AG04450 (cell line): ENCODE measurements at regions of chr1 and their contacts with region 1.

Region 1: DNA sequence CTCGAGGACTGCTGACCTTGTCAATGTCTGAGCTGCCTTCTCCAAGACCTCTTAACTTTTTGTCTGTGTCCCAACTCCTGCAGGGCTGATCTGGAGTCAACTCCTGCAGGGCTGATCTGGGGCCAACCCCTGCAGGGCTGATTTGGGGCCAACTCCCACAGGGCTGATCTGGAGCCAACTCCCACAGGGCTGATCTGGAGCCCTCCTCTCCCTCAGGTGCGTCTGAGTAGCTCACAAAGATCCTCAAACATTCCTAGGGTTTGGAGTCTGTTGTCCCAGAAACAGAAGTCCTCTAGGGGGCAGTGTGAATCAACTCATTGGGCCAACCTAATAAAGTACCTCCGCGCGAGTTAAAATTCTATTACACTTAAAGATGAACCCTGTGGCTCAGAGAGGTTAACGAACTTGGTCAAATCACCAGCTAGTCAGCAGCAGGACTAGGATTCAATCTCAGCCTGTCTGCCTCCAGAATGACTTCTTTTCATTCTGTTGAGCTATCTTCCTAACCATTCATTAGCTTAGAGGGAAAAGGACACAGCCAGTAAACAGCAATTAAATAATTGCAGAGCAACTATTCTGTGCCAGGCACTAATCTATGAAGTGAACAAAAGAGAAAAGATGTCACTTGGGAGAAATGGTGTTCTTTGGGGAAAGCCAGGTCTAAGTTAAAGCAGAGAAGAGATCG is 17.2 kb upstream of the RLF start:
- DNase-seq: peak; percentile 36
- H3K4me3 ChIP-seq: no peak overlapping the region
- H3K27ac ChIP-seq: no peak overlapping the region
- H3K27me3 ChIP-seq: peaks cover 30% of the 10 kb centered on the region
- CTCF ChIP-seq: peak; percentile 85

Region 2: GRCh38 chr1:40132383-40133311 is 11.4 kb before region 1 on chr1:
- CTCF ChIA-PET with region 1: interaction called, 39 read pairs
- POLR2A ChIA-PET with region 1: no interaction called
- DNase-seq: no peak
- H3K4me3 ChIP-seq: peak overlapping the region; percentile 44
- H3K27ac ChIP-seq: no peak overlapping the region
- H3K27me3 ChIP-seq: peaks cover 18% of the 10 kb centered on the region
- CTCF ChIP-seq: 0 out of 2 replicates have a peak, but pooled peaks have one; percentile 8

Region 3: DNA sequence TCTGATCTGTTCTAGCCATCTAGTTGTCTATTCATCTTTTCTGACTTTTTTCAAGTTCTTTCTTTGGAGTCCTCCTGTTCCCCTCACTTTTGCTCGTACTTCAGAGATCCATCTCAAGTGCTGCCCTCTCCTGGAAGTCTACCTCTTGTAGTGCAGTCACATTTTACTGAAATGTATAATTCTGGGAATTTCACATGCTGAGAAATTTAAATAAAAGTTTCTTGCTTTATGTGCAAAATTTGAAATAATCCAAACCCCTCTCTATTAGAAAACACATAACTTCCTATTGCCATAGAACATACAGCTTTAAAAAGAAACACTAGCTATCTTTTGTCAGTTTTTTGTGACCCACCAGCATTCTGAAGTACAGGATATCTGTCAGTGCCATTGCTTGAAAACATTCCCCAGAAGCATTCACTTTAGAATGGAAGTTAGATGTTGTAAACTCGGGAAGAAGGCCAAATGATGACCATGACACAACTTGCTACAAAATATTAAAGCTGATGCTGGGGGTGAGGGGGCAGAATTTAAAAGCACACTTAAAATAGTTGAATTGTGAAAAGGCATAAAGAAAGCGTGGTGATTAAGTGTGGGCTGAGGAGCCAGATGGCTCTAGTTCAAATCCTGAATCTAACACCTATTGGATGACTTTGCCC is 39.1 kb after region 1 on chr1:
- CTCF ChIA-PET with region 1: interaction called, 14 read pairs
- POLR2A ChIA-PET with region 1: no interaction called
- DNase-seq: no peak
- H3K4me3 ChIP-seq: no peak overlapping the region
- H3K27ac ChIP-seq: no peak overlapping the region
- H3K27me3 ChIP-seq: no peaks in the 10 kb centered on the region
- CTCF ChIP-seq: peak; percentile 52

Region 4: GRCh38 chr1:40404670-40405462 is 260.8 kb after region 1 on chr1:
- CTCF ChIA-PET with region 1: interaction called, 46 read pairs
- POLR2A ChIA-PET with region 1: no interaction called
- DNase-seq: no peak
- H3K4me3 ChIP-seq: no peak overlapping the region
- H3K27ac ChIP-seq: no peak overlapping the region
- H3K27me3 ChIP-seq: no peaks in the 10 kb centered on the region
- CTCF ChIP-seq: peak; percentile 77

Region 5: GRCh38 chr1:40531381-40532061 is 387.5 kb after region 1 on chr1 and contains the start of gene ZNF684:
- CTCF ChIA-PET with region 1: interaction called, 12 read pairs
- POLR2A ChIA-PET with region 1: no interaction called
- DNase-seq: peak; percentile 85
- H3K4me3 ChIP-seq: peak within 1 kb of the TSS; percentile 89
- H3K27ac ChIP-seq: peak within 1 kb of the TSS; percentile 77
- H3K27me3 ChIP-seq: no peaks in the 10 kb centered on the region
- CTCF ChIP-seq: no peak
- polyA plus RNA-seq, gene ZNF684: 2.3 and 3.2 TPM in 2 replicates